ENCODE measurements at regions of chr1 and their contacts with region 1.

Region 1: GRCh38 chr1:157490467-157491165 is 61.7 kb downstream of the FCRL5 start:
- DNase-seq: peak; percentile 90
- H3K4me3 Mint-ChIP-seq: no peak overlapping the region
- H3K27ac Mint-ChIP-seq: no peak overlapping the region
- H3K4me1 Mint-ChIP-seq: no peaks in the 10 kb centered on the region
- H3K27me3 Mint-ChIP-seq: peaks cover 43% of the 10 kb centered on the region
- CTCF ChIP-seq: peak; percentile 88

Region 2: GRCh38 chr1:157170677-157171515 is 319.7 kb before region 1 on chr1:
- CTCF ChIA-PET with region 1: no interaction called
- intact Hi-C with region 1: loop called (anchors 2 kb)
- DNase-seq: peak; percentile 86
- H3K4me3 Mint-ChIP-seq: no peak overlapping the region
- H3K27ac Mint-ChIP-seq: no peak overlapping the region
- H3K4me1 Mint-ChIP-seq: no peaks in the 10 kb centered on the region
- H3K27me3 Mint-ChIP-seq: peaks cover 86% of the 10 kb centered on the region
- CTCF ChIP-seq: peak; percentile 80

Region 3: GRCh38 chr1:157312082-157312812 is 178.4 kb before region 1 on chr1:
- CTCF ChIA-PET with region 1: no interaction called
- intact Hi-C with region 1: loop called (anchors 2 kb)
- DNase-seq: no peak
- H3K4me3 Mint-ChIP-seq: no peak overlapping the region
- H3K27ac Mint-ChIP-seq: no peak overlapping the region
- H3K4me1 Mint-ChIP-seq: peaks cover 7% of the 10 kb centered on the region
- H3K27me3 Mint-ChIP-seq: peaks cover 42% of the 10 kb centered on the region
- CTCF ChIP-seq: no peak

Region 4: DNA sequence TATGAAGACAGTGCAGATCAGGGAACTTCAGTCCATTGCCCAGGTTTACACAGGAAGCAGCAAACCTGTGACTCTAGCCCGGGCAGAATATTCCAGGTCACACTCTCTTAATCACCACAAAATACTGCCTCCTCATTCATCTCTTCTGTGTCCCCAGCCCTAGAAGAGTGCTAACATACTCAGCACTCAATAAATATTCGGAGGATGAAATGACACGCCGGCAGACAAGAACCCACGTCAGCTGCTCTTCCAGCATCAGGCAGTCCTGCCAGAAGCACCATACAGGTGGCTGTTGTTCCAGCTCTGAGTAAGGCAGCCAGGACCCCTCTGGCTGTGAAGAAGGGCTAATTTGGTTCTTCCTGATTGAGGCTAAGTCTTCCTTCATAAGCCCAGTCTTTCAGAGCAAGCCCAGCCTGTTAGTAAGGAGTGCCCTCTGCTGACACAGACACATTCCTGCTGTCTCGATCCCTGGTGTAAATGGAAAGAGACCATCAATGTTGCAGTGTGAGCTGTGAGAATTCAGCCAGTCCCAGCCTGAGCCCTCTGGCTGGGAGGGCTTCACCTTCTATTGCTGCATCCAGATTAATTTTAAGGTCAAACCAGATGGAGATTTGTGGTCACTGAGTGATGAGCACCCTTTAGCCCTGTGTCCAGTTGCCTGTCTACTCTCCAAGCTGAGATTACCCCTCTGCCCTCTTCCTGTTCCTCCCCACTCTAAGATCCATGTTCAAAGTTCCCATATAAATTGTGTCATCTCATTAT is 457.9 kb after region 1 on chr1:
- CTCF ChIA-PET with region 1: interaction called, 5 read pairs
- intact Hi-C with region 1: loop called (anchors 5 kb)
- DNase-seq: peak; percentile 61
- H3K4me3 Mint-ChIP-seq: no peak overlapping the region
- H3K27ac Mint-ChIP-seq: no peak overlapping the region
- H3K4me1 Mint-ChIP-seq: peaks cover 26% of the 10 kb centered on the region
- H3K27me3 Mint-ChIP-seq: peaks cover 28% of the 10 kb centered on the region
- CTCF ChIP-seq: peak; percentile 72